ENCODE measurements at regions of chr16 and their contacts with region 1.

Region 1: GRCh38 chr16:84738255-84739038 is 38.6 kb downstream of the USP10 start:
- DNase-seq: peak; percentile 87
- ATAC-seq: peak; percentile 88
- H3K4me3 Mint-ChIP-seq: peak overlapping the region; percentile 54
- H3K27ac Mint-ChIP-seq: peak overlapping the region; percentile 64
- H3K4me1 Mint-ChIP-seq: peaks cover 59% of the 10 kb centered on the region
- H3K27me3 Mint-ChIP-seq: no peaks in the 10 kb centered on the region

Region 2: DNA sequence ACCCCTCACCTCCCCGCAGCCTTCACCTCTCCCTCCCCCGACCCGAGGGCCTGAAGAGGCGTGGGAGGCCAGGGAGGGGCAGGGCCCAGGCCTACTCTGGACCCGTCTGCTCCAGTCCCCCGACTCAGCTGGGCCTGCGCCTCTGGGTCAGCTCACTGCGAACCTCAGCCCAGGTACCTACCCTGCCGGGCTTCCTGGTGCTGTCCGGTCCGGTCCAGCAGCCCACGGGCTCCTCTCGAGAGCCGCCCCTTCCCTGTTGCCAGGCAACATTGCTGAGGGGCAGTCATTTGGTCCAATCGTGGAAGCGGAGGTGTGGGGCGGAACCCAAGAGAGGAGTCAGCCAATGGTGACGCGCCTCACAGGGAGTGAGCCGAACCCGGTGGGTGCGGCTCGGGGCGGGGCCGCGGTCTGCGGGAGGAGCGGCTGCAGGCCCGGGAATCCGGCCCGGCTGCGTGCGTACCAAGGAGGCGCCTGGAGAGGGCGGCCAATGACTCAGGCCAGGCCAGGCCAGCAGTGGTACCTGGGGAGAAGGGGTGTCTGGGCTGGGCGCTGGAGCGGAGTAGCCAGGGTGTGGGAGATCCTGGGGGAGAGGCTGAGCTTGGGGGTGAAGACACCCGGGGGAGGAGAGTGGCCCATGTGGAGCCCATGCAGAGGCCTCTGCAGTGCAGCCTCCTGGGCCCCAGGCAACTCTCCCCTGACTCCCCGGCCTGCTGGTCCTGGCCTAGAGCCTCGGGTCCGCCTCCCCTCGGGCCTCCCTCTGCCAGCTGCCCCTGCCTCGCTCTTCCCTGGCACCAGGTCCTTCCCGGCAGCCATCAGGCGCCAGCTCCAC is 233.8 kb before region 1 on chr16 and contains the start of gene MEAK7:
- CTCF ChIA-PET with region 1: interaction called, 13 read pairs
- DNase-seq: peak; percentile 98
- ATAC-seq: peak; percentile 94
- H3K4me3 Mint-ChIP-seq: peak within 1 kb of the TSS; percentile 80
- H3K27ac Mint-ChIP-seq: peak within 1 kb of the TSS; percentile 94
- H3K4me1 Mint-ChIP-seq: peaks cover 65% of the 10 kb centered on the region
- H3K27me3 Mint-ChIP-seq: no peaks in the 10 kb centered on the region
- total RNA-seq, gene MEAK7: 37.9 to 73.9 TPM

Region 3: GRCh38 chr16:84599521-84600202 is 138.8 kb before region 1 on chr16:
- CTCF ChIA-PET with region 1: interaction called, 10 read pairs
- DNase-seq: peak; percentile 83
- ATAC-seq: peak; percentile 21
- H3K4me3 Mint-ChIP-seq: peak overlapping the region; percentile 77
- H3K27ac Mint-ChIP-seq: peak overlapping the region; percentile 97
- H3K4me1 Mint-ChIP-seq: peaks cover 87% of the 10 kb centered on the region
- H3K27me3 Mint-ChIP-seq: no peaks in the 10 kb centered on the region

Region 4: GRCh38 chr16:84672276-84673202 is 65.9 kb before region 1 on chr16:
- CTCF ChIA-PET with region 1: interaction called, 29 read pairs
- DNase-seq: peak; percentile 86
- ATAC-seq: peak; percentile 88
- H3K4me3 Mint-ChIP-seq: no peak overlapping the region
- H3K27ac Mint-ChIP-seq: no peak overlapping the region
- H3K4me1 Mint-ChIP-seq: peaks cover 8% of the 10 kb centered on the region
- H3K27me3 Mint-ChIP-seq: peaks cover 15% of the 10 kb centered on the region

Region 5: GRCh38 chr16:84726079-84726668 is 12.3 kb before region 1 on chr16:
- CTCF ChIA-PET with region 1: interaction called, 164 read pairs
- DNase-seq: peak; percentile 86
- ATAC-seq: peak; percentile 72
- H3K4me3 Mint-ChIP-seq: peak overlapping the region; percentile 52
- H3K27ac Mint-ChIP-seq: no peak overlapping the region
- H3K4me1 Mint-ChIP-seq: peaks cover 72% of the 10 kb centered on the region
- H3K27me3 Mint-ChIP-seq: no peaks in the 10 kb centered on the region

Region 6: DNA sequence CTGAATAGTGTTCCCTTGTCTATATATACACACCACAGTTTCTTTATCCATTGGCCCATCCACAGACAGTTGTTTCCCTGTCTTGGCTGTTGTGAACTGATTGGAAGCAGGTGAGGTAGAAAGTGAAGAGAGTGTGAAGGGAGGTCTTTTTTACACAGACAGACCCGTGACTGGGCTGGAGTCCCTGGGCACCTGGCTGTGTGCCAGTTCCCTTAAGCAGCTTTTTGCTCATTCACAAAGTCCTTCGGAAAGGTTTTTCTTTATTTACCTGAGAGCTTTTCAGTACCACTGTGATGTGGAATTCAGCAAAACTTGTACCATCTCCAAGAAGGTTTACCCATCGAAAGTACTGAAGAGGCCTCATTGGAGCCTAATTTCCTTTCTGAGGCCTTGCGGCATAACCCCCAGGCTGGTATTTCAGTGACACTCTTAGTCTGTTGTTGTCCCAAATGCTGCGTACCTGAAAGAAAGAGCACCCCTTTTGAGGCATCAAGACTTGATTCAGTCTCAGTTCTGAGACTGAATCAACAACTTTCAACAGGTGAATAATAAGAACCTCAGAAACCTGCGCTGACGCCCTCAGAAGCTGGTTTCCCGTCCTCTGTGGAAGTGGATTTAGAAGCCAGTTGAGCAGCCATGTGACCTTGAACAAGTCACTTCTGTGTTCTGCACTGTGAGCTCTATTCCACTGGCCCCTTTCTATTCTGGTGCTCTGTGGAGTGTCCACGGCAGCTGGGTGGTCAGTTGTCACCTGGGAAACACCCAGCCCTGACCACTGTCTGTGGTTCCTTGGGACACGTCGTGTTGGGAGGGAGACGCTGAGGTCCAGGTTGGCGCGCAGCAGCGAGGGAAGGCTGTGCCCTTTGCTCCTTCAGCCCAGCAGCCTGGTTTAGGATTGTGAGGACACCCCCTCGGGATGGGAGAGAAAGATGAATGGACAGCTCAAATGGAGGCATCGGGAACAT is 27.5 kb after region 1 on chr16:
- CTCF ChIA-PET with region 1: interaction called, 10 read pairs
- DNase-seq: no peak
- ATAC-seq: no peak
- H3K4me3 Mint-ChIP-seq: no peak overlapping the region
- H3K27ac Mint-ChIP-seq: no peak overlapping the region
- H3K4me1 Mint-ChIP-seq: peaks cover 23% of the 10 kb centered on the region
- H3K27me3 Mint-ChIP-seq: no peaks in the 10 kb centered on the region

Region 7: DNA sequence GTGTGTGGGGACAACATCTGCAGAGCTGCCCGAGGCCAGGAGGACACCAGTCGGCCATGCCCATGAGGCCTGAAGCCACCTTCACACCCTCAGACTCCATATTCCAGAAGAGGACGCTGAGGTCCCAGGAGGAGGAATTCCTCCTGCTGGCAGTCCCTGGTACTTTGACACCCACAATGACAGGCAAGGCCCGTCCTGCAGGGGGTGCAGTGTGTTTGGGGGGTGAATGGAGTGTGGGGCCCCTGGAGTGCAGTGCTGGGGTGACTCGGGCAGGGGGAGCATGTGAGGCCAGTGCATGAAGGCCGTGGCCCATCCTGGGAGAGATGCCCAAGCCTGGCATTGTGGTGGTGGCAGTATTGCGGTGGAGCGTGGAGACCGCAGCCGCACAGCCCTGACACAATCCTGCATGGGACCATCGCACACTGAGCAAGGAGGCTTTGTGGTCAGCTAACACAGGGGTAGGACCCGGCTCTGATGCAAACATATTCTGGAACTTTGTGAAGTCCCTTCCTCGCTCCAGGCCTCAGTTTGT is 220.7 kb after region 1 on chr16:
- CTCF ChIA-PET with region 1: no interaction called
- DNase-seq: no peak
- ATAC-seq: no peak
- H3K4me3 Mint-ChIP-seq: no peak overlapping the region
- H3K27ac Mint-ChIP-seq: no peak overlapping the region
- H3K4me1 Mint-ChIP-seq: no peaks in the 10 kb centered on the region
- H3K27me3 Mint-ChIP-seq: peaks cover 8% of the 10 kb centered on the region

Region 8: DNA sequence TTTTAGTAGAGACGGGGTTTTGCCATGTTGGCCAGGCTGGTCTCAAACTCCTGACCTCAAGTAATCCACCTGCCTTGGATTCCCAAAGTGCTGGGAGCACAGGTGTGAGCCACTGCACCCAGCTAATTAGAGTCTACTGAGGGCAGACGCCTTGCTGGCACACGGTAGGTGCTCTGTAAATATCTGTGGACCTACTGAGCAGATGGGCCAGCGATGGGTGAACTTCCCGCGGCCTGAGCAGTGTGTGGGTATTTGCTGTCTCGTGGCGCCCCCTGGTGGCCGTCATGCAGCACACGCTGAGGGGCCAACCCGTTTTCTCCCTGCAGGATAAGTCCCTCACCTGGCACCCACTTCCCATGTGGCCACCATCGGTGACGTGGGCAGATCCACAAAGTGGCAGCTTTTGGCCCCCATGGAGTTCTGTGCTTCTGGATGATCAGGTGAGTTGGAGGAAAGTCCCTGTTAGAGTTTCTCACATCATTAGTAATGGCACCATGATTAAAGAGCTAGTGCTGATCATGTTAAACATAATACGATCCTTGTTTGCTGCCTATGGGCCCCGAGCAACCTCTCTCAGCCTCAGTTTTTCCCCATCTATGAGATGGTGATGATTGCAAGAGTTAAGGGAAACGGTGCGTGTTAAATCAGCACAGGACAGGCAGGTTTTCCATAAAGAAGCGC is 232.1 kb after region 1 on chr16:
- CTCF ChIA-PET with region 1: interaction called, 11 read pairs
- DNase-seq: peak; percentile 82
- ATAC-seq: peak; percentile 97
- H3K4me3 Mint-ChIP-seq: no peak overlapping the region
- H3K27ac Mint-ChIP-seq: no peak overlapping the region
- H3K4me1 Mint-ChIP-seq: no peaks in the 10 kb centered on the region
- H3K27me3 Mint-ChIP-seq: peaks cover 2% of the 10 kb centered on the region